Sigmoid colon (tissue), 7 donors: ENCODE measurements at regions of chr22 and their contacts with region 1.

Region 1: GRCh38 chr22:20156611-20157429 is 6.0 kb upstream of the CCDC188 start:
- DNase-seq: peak; percentile 92
- H3K4me3 ChIP-seq: no peak overlapping the region
- H3K27ac ChIP-seq: no peak overlapping the region
- H3K4me1 ChIP-seq: peaks cover 0 to 3% (median 0%) of the 10 kb centered on the region in 4 donors
- H3K27me3 ChIP-seq: peaks cover 0 to 28% (median 14%) of the 10 kb centered on the region in 3 donors
- CTCF ChIP-seq: peak; percentile 97 to 100 (median 100)
- EP300 ChIP-seq: no peak
- POLR2A ChIP-seq: no peak

Region 2: DNA sequence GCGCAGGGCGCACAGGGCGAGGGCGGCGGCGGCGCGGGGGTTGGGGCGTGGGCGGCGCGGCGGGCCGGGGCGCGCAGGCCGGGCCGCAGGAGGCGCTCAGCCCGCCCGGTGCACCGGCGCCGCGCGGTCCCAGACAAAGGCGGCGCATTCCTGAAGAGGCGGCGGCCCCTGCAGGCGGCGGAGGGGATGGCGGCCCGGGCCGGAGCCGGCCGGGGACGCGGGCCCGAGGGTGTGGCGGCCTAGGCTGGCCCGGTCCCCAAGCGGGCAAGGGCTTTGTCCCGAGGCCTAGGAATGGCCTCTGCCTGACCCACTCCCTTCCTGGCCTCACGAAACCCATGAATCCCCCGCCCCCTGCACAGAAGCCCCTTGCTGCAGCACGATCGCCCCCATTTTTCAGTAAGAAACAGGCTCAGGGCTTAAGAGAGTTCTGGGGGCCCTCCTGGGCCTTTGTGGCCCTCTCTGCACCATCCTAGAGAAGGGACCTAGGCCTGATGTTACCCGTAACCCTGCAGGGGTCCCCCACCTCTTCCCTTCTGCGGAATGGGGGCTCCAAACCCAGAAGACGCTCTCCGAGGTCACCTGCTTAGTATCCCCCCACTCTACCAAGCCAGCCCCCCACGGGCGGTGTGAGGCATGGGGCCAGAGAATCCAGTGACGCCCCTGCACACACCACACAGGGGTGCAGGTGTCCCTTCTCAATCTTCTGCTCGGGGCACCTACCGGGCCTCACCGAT is 111.6 kb after region 1 on chr22 and contains the start of gene RTN4R:
- intact Hi-C with region 1: loop called (anchors 5 kb)
- DNase-seq: no peak
- H3K4me3 ChIP-seq: peak within 1 kb of the TSS in 3 of 4 donors; percentile 41 to 47 (median 44)
- H3K27ac ChIP-seq: no peak within 1 kb of the TSS
- H3K4me1 ChIP-seq: peaks cover 0 to 14% (median 10%) of the 10 kb centered on the region in 4 donors
- H3K27me3 ChIP-seq: peaks cover 0 to 17% (median 11%) of the 10 kb centered on the region in 3 donors
- CTCF ChIP-seq: peak in 3 of 4 experiments; percentile 5 to 54 (median 27)
- EP300 ChIP-seq: no peak
- POLR2A ChIP-seq: no peak
- total RNA-seq, gene RTN4R: 0.36 to 0.83 TPM in 2 of 4 donors, not detected in the others

Region 3: GRCh38 chr22:20284471-20285086 is 127.8 kb after region 1 on chr22:
- intact Hi-C with region 1: loop called (anchors 1 kb)
- DNase-seq: no peak
- H3K4me3 ChIP-seq: no peak overlapping the region
- H3K27ac ChIP-seq: no peak overlapping the region
- H3K4me1 ChIP-seq: no peaks in the 10 kb centered on the region
- H3K27me3 ChIP-seq: no peaks in the 10 kb centered on the region
- CTCF ChIP-seq: no peak
- EP300 ChIP-seq: no peak
- POLR2A ChIP-seq: no peak